Posterior vena cava (tissue), 2 donors: ENCODE measurements at regions of chr12 and their contacts with region 1.

Region 1: GRCh38 chr12:113980537-113981337 is 14.6 kb upstream of the RBM19 start:
- DNase-seq: no peak

Region 2: DNA sequence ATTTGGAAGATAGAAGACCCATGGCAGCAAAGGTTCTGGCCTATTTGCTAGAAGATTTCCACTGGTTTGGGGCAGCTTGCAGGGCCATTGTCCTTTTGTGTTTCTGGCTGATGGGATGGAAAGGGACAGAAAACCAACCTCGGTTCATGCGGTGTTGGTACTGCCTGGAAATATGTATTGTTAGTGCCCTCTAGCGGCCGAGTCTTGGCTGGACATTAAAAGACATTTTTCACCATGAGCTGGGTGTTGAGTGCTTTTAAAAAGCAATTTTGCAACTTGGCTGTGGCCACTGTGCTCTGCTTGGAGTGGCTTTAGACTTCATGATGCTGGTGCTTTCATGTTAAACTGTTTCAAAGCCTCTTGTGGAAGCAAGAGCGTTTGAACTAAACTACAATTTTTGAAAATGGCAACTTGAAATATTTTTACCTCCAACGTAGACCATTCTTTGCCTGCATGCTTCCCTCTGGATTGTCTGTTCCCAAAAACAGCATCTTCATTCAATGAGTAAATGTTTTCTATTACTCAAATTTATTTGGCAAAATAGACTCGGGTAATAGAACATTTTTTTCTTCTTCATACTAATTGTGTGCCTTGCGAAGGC is 527.9 kb after region 1 on chr12:
- intact Hi-C with region 1: loop called (anchors 10 kb)
- DNase-seq: no peak

Region 3: GRCh38 chr12:115657081-115658013 is 1676.6 kb after region 1 on chr12:
- intact Hi-C with region 1: loop called in 1 of 2 experiments (anchors 10 kb)
- DNase-seq: no peak